ENCODE measurements at regions of chr1 and their contacts with region 1.

Region 1: DNA sequence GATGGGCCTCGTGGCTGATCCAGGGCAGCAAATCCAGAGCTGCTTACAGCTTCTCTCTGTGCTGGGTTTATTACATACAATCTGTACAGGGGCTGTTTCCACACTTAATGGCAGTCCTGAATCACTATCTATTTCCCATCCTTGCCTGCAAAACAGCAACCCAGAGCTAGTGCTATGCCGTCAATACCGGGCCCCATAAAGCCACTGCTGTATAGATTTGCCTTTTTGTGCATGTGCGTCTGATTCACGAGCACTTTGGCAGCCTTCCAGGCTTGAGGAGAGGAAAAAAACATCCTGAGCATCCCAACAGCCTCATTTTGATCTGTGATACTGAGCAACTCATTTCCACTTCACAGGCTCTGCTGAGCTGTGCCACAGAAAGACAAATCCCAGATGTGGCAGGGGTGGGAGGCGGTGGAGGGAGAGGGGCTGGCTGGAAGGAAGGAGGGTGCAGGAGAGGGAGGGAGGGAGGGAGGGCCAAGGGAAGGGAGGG is 65.2 kb upstream of the TARBP1 start:
- DNase-seq: peak; percentile 82

Region 2: GRCh38 chr1:234478481-234479309 is 65.4 kb before region 1 on chr1 and contains the start of gene TARBP1:
- intact Hi-C with region 1: no loop called
- DNase-seq: peak; percentile 86
- total RNA-seq, gene TARBP1: 9.1 TPM

Region 3: GRCh38 chr1:234519506-234519905 is 24.6 kb before region 1 on chr1:
- intact Hi-C with region 1: loop called (anchors 2 kb)
- DNase-seq: no peak

Region 4: DNA sequence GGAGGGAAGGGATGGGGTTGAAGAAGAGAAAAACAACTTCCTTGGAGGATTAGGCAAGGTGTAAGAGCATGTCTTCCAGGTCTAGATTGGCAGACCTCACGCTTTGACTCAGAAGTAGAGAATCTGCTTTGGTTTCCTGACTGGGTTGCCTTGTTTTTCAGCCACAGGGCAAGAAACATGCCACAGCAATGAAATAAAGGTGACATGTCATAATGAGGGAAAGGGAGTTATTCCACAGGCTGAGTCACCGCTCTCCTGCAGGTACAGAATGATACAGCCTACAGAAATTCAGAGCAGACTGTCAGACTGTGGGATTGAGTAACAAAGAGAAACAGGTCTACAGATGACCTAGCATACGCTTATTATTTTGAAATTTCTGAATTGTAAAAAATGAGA is 20.5 kb after region 1 on chr1:
- intact Hi-C with region 1: no loop called
- DNase-seq: no peak

Region 5: GRCh38 chr1:234584926-234585325 is 40.8 kb after region 1 on chr1:
- intact Hi-C with region 1: loop called (anchors 2 kb)
- DNase-seq: no peak

Region 6: GRCh38 chr1:234656856-234657654 is 112.9 kb after region 1 on chr1:
- intact Hi-C with region 1: no loop called
- DNase-seq: no peak

Region 7: DNA sequence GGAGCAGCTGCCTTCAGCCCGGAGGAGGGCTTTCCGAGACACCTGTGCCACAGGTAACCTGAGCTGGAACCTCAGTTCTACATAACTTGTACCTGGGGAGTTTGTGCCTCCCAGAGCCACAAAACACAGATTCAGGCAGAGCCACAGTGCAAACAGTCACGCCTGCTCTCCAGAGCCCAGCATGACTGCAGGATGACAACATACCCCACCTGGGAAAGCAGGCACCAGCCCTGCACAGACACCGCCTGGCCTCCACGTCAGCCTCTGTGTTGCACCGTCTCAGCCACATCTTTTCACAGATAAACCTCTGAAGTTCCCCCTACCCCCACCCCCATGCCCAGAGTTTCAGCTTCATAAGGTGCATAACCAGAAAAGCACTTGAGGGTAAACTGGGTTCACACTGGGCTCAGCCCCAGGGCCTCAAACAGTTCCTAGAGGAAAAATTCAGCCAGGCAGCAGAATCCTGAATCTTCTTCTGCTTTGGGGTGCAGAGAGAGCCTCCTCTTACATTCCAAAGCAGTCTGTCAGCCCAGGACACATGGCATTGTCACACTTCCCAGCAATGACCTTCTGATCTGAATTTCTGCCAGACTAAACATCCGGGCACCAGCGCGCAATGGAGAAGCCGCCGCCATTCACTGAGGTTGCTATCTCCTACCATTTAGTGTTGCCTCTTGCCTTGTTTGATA is 355.1 kb after region 1 on chr1:
- intact Hi-C with region 1: loop called (anchors 5 kb)
- DNase-seq: no peak

Measured in cardiac septum (tissue), 1 donor.